ENCODE measurements at regions of chr2 and their contacts with region 1.

Region 1: DNA sequence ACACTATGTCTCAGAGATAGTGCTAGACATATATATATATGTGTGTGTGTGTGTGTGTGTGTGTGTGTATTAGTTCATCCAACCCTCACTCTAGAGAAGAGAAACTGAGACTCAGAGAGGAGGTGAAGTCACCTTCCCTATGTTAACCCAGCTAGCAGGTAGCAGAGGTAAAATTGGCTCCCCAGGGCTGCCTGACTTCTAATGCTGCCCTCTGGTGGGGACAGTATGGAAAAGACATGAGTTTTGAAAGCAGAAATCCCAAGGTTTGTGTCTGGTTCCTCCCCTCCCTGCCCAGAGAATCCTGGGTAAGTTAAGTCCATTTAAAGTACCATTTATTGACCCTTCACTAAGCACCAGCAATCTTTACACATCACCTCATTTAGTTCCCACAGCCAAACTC is 137.7 kb downstream of the THNSL2 start:
- DNase-seq: peak in 1 of 2 experiments; percentile 8
- H3K4me3 ChIP-seq: no peak overlapping the region
- H3K27ac ChIP-seq: no peak overlapping the region
- H3K4me1 ChIP-seq: no peaks in the 10 kb centered on the region
- H3K27me3 ChIP-seq: no peaks in the 10 kb centered on the region
- CTCF ChIP-seq: peak; percentile 65

Region 2: GRCh38 chr2:88281302-88282217 is 26.3 kb before region 1 on chr2:
- CTCF ChIA-PET with region 1: no interaction called
- POLR2A ChIA-PET with region 1: no interaction called
- intact Hi-C with region 1: no loop called
- DNase-seq: no peak
- H3K4me3 ChIP-seq: no peak overlapping the region
- H3K27ac ChIP-seq: no peak overlapping the region
- H3K4me1 ChIP-seq: no peaks in the 10 kb centered on the region
- H3K27me3 ChIP-seq: peaks cover 85% of the 10 kb centered on the region
- CTCF ChIP-seq: no peak

Region 3: DNA sequence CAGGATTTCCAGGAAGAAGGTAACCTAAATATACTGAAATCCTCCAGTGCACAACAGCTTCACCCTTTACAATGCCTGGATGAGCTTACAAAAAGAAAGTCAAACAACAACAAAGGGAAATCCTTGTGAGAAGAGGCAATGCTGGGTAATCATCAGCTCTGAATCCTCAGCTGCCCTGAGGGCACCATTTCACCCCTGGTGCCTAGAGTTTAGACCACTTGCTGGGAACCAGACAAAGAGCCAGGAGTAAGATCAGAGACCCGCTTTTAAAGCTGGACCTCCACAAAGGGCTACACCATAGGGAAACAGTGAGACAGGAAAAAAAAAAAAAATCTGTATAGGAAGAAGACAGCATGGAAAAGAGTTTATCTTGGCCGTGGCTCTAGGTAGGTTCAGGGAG is 47.7 kb after region 1 on chr2:
- CTCF ChIA-PET with region 1: interaction called, 10 read pairs
- POLR2A ChIA-PET with region 1: no interaction called
- intact Hi-C with region 1: no loop called
- DNase-seq: no peak
- H3K4me3 ChIP-seq: no peak overlapping the region
- H3K27ac ChIP-seq: no peak overlapping the region
- H3K4me1 ChIP-seq: no peaks in the 10 kb centered on the region
- H3K27me3 ChIP-seq: peaks cover 23% of the 10 kb centered on the region; the same call in 1 of the 2 replicates
- CTCF ChIP-seq: no peak

Region 4: GRCh38 chr2:88481691-88482338 is 174.0 kb after region 1 on chr2:
- CTCF ChIA-PET with region 1: no interaction called
- POLR2A ChIA-PET with region 1: no interaction called
- intact Hi-C with region 1: no loop called
- DNase-seq: peak in 1 of 2 experiments; percentile 85
- H3K4me3 ChIP-seq: no peak overlapping the region
- H3K27ac ChIP-seq: no peak overlapping the region
- H3K4me1 ChIP-seq: 0 out of 2 replicates have a peak, but pooled peaks cover 8% of the 10 kb centered on the region
- H3K27me3 ChIP-seq: peaks cover 9% of the 10 kb centered on the region; the same call in 1 of the 2 replicates
- CTCF ChIP-seq: no peak

Measured in PC-9 (cell line).